ENCODE measurements at regions of chr14 and their contacts with region 1.

Region 1: DNA sequence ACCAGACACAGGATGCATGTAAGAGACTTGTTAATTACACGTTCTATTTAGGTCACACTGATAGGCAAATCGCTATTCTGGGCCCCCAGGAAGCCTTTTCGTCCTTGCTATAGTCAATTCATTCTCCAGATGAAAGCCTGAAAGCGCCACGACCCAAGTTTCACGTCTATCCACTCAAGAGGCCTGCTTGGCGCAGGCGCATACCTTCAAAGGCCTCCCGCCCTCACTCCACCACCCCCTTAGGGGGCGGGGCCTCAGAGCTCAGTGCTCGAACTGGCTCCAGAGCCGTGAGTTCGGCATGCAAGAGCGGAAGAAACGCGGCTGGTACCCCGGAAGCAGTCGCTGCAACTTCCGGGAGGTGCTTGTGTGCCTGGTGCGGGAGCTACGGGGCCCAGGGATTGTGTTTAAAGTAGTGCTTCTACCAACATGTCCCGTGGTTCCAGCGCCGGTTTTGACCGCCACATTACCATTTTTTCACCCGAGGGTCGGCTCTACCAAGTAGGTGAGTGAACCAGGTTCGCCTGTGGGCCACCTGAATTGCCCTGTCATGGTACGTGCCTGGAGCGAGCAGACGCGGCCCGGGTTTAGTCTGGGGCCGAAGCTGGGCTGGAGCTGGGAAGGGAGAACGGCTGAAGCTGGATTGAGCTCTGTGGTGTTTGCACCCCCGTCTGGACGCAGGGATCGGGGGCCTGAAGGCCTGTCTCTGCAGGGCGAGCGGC is at the start of gene PSMA6:
- DNase-seq: peak; percentile 95
- ATAC-seq: peak; percentile 95
- H3K4me3 ChIP-seq: peak within 1 kb of the TSS; percentile 81 to 90
- H3K27ac ChIP-seq: peak within 1 kb of the TSS; percentile 95
- H3K4me1 ChIP-seq: peaks cover 3% of the 10 kb centered on the region; the same call in 1 of the 2 replicates
- H3K27me3 ChIP-seq: no peaks in the 10 kb centered on the region
- CTCF ChIP-seq: no peak
- total RNA-seq, gene PSMA6: 197 TPM

Region 2: GRCh38 chr14:35133542-35134327 is 158.5 kb before region 1 on chr14:
- CTCF ChIA-PET with region 1: no interaction called
- POLR2A ChIA-PET with region 1: interaction called, 13 read pairs
- in situ Hi-C with region 1: no loop called
- intact Hi-C with region 1: no loop called
- DNase-seq: no peak
- ATAC-seq: no peak
- H3K4me3 ChIP-seq: no peak overlapping the region
- H3K27ac ChIP-seq: no peak overlapping the region
- H3K4me1 ChIP-seq: no peaks in the 10 kb centered on the region
- H3K27me3 ChIP-seq: no peaks in the 10 kb centered on the region
- CTCF ChIP-seq: no peak

Region 3: GRCh38 chr14:35140718-35141581 is 151.3 kb before region 1 on chr14:
- CTCF ChIA-PET with region 1: no interaction called
- POLR2A ChIA-PET with region 1: no interaction called
- in situ Hi-C with region 1: no loop called
- intact Hi-C with region 1: loop called (anchors 10 kb)
- DNase-seq: no peak
- ATAC-seq: no peak
- H3K4me3 ChIP-seq: no peak overlapping the region
- H3K27ac ChIP-seq: no peak overlapping the region
- H3K4me1 ChIP-seq: no peaks in the 10 kb centered on the region
- H3K27me3 ChIP-seq: no peaks in the 10 kb centered on the region
- CTCF ChIP-seq: peak; percentile 34; the same call in 1 of the 2 replicates

Region 4: GRCh38 chr14:35235840-35236239 is 56.4 kb before region 1 on chr14:
- CTCF ChIA-PET with region 1: no interaction called
- POLR2A ChIA-PET with region 1: interaction called, 10 read pairs
- in situ Hi-C with region 1: no loop called
- intact Hi-C with region 1: no loop called
- DNase-seq: no peak
- ATAC-seq: no peak
- H3K4me3 ChIP-seq: no peak overlapping the region
- H3K27ac ChIP-seq: no peak overlapping the region
- H3K4me1 ChIP-seq: no peaks in the 10 kb centered on the region
- H3K27me3 ChIP-seq: no peaks in the 10 kb centered on the region
- CTCF ChIP-seq: no peak

Region 5: DNA sequence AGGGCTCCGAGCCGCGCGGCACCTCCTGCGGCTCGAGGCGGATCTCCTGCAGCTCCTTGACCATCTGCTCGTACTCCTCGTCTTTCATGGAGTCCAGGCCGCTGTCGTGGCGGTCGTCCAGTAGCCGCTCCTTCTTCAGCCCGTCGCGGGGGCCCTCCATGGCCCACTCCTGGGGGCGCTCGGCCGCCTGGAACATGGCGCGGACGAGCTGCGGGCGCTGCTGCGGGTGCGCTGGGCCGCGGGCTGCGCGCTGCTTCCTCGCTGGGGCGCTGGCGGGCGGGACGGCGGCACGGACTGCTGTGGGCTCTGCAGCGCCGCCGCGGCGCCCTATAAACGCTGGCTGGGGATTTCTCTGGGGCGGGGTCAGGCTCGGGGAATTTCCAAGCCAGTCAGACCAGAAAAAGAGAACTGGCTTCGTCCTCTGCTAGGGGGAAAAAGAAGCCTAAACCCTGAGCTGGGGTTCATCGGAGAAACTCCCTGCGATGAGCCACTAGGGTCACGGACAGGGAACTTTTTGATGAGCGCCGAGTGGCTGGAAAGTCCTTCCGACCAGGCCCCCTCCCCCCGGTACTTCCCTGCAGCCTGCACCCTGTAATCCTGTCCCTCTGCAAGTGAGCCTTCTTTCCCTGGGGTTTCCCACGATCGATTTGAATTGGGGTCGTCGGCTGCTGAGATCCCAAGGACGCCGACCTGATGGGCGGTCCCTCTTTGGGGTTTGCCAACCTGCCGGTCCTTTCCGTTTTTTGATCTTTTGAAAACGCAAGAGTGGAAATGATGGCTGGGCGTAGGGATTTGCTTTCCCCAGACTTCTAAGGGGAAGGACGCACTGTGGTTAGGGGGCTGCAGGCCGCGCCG is 112.5 kb after region 1 on chr14 and contains the start of gene NFKBIA:
- CTCF ChIA-PET with region 1: no interaction called
- POLR2A ChIA-PET with region 1: no interaction called
- in situ Hi-C with region 1: no loop called
- intact Hi-C with region 1: loop called (anchors 10 kb)
- DNase-seq: no peak
- ATAC-seq: peak; percentile 81
- H3K4me3 ChIP-seq: peak within 1 kb of the TSS; percentile 68 to 73
- H3K27ac ChIP-seq: peak within 1 kb of the TSS; percentile 97
- H3K4me1 ChIP-seq: peaks cover 43% of the 10 kb centered on the region
- H3K27me3 ChIP-seq: no peaks in the 10 kb centered on the region
- CTCF ChIP-seq: no peak; the same call in 1 of the 2 replicates
- total RNA-seq, gene NFKBIA: 99.4 TPM

Measured in Panc1 (cell line).